ENCODE measurements at regions of chr20 and their contacts with region 1.

Region 1: GRCh38 chr20:45095753-45096371 is 5.1 kb downstream of the KCNS1 start:
- DNase-seq: peak in 4 of 10 donors; percentile 29 to 74 (median 52)
- H3K4me3 ChIP-seq: peak overlapping the region in 38 of 59 donors; percentile 2 to 59 (median 24)
- H3K27ac ChIP-seq: peak overlapping the region in 41 of 59 donors; percentile 1 to 81 (median 55)
- H3K27me3 ChIP-seq: peaks cover 0 to 28% (median 12%) of the 10 kb centered on the region in 45 donors
- CTCF ChIP-seq: peak in 55 of 56 donors; percentile 51 to 90 (median 79)

Region 2: DNA sequence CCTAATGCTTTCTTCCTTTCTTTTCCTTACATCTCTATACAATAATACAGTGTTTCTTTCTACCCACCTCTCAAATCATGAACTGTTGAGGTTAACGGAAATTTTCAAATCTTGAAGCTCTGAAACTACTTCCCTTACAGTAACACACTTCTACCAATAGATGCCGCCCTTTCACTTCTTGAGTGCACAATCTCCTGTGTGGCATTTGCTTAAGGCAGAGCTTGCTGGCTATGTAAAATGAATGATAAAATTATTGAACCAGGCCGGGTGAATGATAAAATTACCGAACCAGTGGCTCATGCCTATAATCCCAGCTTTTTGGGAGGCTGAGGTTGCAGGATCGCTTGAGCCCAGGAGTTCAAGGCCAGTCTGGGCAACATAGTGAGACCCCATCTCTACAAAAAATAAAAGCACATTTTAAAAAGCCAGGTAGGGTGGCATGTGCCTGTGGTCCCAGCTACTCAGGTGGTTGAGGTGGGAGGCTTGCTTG is 51.7 kb before region 1 on chr20:
- intact Hi-C with region 1: loop called (anchors 1 kb)
- DNase-seq: peak in 1 of 10 donors; percentile 50
- H3K4me3 ChIP-seq: peak overlapping the region in 1 of 59 donors; percentile 12
- H3K27ac ChIP-seq: peak overlapping the region in 12 of 59 donors; percentile 26 to 62 (median 45)
- H3K27me3 ChIP-seq: no peaks in the 10 kb centered on the region
- CTCF ChIP-seq: peak; percentile 72 to 98 (median 91)

Region 3: DNA sequence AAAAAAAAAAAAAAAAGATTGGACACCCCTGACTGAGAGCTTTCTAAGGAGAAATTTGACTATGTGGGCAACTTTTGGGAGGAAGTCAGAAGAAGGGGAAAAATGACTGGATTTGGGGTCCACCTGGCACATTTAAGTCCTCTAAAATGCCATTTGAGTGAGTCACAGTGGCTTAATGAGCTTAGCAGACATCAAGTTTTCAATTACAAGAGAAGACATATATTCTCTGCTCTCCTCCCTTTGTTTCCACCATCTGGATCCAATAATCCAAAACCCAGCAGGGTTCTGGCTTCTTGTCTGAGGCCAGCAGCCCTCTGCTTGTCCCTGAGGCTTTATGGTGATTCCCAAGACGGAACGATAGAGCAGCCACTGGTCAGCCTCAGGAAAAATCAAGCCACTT is 85.8 kb after region 1 on chr20:
- intact Hi-C with region 1: no loop called
- DNase-seq: no peak
- H3K4me3 ChIP-seq: no peak overlapping the region
- H3K27ac ChIP-seq: no peak overlapping the region
- H3K27me3 ChIP-seq: no peaks in the 10 kb centered on the region
- CTCF ChIP-seq: no peak

Region 4: GRCh38 chr20:45193331-45193730 is 97.5 kb after region 1 on chr20:
- intact Hi-C with region 1: loop called in 1 of 2 experiments (anchors 2 kb)
- DNase-seq: peak in 1 of 10 donors; percentile 24
- H3K4me3 ChIP-seq: no peak overlapping the region
- H3K27ac ChIP-seq: peak overlapping the region in 47 of 59 donors; percentile 0 to 95 (median 74)
- H3K27me3 ChIP-seq: peaks cover 0 to 4% (median 0%) of the 10 kb centered on the region in 45 donors
- CTCF ChIP-seq: no peak

Region 5: DNA sequence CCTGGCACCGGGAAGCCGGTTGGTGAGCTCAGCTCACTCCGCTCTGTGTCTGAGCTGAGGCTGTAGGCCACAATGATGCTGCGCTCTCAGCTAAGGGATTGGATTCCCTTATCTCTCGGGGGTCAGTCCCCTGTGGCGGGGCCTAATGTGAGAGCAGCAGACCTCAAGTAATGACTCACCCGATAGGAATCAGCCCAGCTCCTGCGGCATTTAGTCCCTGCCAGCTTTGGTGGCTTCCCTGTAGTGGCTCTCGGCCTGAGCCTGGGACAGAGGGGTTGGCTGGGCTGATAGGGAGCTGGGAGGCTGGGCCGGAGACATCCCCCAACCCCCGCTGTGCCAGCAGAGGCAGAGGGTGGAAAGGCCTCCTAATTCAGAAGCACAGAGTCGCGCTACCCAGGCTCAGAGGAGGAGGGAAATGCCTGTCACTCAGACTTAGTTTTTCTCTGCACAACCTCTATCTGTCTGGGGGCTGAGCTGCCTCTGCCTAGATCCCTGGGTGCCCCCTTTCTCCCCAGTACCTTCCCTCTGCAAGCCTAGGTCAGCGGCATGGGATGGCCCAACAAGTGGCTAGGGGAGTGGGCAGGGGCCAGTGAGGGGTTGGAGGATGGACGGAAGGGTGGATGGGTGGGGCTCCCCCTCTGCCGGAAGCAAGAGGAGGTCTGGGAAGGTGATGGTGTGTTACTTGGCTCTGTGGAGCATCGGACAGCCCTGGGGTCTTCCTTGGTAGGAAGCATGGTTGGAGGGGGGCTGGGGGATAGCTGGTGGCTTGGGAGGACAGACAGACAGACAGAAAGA is 1120.2 kb after region 1 on chr20:
- intact Hi-C with region 1: no loop called
- DNase-seq: no peak
- H3K4me3 ChIP-seq: no peak overlapping the region
- H3K27ac ChIP-seq: peak overlapping the region in 1 of 59 donors; percentile 26
- H3K27me3 ChIP-seq: peaks cover 0 to 4% (median 0%) of the 10 kb centered on the region in 45 donors
- CTCF ChIP-seq: no peak